GM13976 (cell line): ENCODE measurements at regions of chr11 and their contacts with region 1.

Region 1: GRCh38 chr11:120500414-120501071 is 11.0 kb upstream of the GRIK4 start:
- DNase-seq: no peak
- CTCF ChIP-seq: no peak

Region 2: GRCh38 chr11:120952461-120953434 is 452.2 kb after region 1 on chr11:
- in situ Hi-C with region 1: loop called (anchors 10 kb)
- DNase-seq: peak; percentile 82
- CTCF ChIP-seq: peak; percentile 76